A673 (cell line): ENCODE measurements at regions of chrX and their contacts with region 1.

Region 1: GRCh38 chrX:129318375-129318774 is 204.9 kb downstream of the SMARCA1 start:
- DNase-seq: peak; percentile 27
- H3K4me3 ChIP-seq: no peak overlapping the region
- H3K27ac ChIP-seq: no peak overlapping the region
- H3K4me1 ChIP-seq: no peaks in the 10 kb centered on the region
- H3K27me3 ChIP-seq: no peaks in the 10 kb centered on the region
- CTCF ChIP-seq: peak; percentile 60

Region 2: DNA sequence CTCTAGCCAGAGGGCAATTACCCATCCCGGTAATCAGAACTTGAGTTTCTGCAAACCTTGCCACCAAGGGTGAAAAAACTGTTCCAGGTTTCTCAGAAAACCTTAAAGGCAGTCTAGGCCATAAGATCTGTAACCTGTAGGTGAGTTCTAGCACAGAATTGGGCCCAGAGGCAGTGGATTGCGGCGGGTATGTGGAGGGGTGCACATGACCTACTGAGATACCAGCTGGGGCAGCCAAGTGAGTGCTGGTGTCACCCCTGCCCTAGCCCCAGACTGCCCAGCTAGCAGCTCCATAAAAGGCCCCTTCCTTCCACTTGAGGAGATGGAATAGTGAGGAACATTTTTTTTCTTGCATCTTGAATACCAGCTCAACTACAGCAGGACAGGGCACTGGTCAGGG is 28.2 kb after region 1 on chrX:
- CTCF ChIA-PET with region 1: no interaction called
- POLR2A ChIA-PET with region 1: no interaction called
- intact Hi-C with region 1: no loop called
- DNase-seq: no peak
- H3K4me3 ChIP-seq: no peak overlapping the region
- H3K27ac ChIP-seq: no peak overlapping the region
- H3K4me1 ChIP-seq: no peaks in the 10 kb centered on the region
- H3K27me3 ChIP-seq: no peaks in the 10 kb centered on the region
- CTCF ChIP-seq: no peak

Region 3: GRCh38 chrX:129360175-129360574 is 41.8 kb after region 1 on chrX:
- CTCF ChIA-PET with region 1: interaction called, 3 read pairs
- POLR2A ChIA-PET with region 1: no interaction called
- intact Hi-C with region 1: loop called (anchors 2 kb)
- DNase-seq: peak; percentile 62
- H3K4me3 ChIP-seq: no peak overlapping the region
- H3K27ac ChIP-seq: no peak overlapping the region
- H3K4me1 ChIP-seq: no peaks in the 10 kb centered on the region
- H3K27me3 ChIP-seq: no peaks in the 10 kb centered on the region
- CTCF ChIP-seq: peak; percentile 75

Region 4: DNA sequence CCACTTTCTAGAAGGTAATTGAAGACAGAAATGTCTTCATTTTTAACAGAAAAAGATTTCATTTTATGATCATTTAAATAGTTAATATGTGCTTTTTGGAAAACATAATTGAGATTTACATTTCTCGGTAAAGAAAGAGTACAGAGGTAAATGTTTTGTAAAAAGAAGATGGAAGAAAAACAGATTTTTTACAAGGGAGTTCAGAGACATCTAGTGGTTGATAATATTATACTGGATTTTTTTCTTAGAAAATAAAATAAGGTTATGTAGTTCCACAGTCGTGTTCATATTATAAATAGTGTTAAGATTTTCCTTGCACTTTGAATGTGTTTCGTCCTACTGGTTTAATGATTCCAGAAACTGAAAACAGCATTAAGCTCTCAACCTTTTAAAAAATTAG is 144.3 kb after region 1 on chrX:
- CTCF ChIA-PET with region 1: no interaction called
- POLR2A ChIA-PET with region 1: no interaction called
- intact Hi-C with region 1: loop called (anchors 5 kb)
- DNase-seq: peak; percentile 1
- H3K4me3 ChIP-seq: no peak overlapping the region
- H3K27ac ChIP-seq: no peak overlapping the region
- H3K4me1 ChIP-seq: no peaks in the 10 kb centered on the region
- H3K27me3 ChIP-seq: no peaks in the 10 kb centered on the region
- CTCF ChIP-seq: peak; percentile 32; the same call in 1 of the 2 replicates